Endothelial cell of umbilical vein (primary cell): ENCODE measurements at regions of chr5 and their contacts with region 1.

Region 1: DNA sequence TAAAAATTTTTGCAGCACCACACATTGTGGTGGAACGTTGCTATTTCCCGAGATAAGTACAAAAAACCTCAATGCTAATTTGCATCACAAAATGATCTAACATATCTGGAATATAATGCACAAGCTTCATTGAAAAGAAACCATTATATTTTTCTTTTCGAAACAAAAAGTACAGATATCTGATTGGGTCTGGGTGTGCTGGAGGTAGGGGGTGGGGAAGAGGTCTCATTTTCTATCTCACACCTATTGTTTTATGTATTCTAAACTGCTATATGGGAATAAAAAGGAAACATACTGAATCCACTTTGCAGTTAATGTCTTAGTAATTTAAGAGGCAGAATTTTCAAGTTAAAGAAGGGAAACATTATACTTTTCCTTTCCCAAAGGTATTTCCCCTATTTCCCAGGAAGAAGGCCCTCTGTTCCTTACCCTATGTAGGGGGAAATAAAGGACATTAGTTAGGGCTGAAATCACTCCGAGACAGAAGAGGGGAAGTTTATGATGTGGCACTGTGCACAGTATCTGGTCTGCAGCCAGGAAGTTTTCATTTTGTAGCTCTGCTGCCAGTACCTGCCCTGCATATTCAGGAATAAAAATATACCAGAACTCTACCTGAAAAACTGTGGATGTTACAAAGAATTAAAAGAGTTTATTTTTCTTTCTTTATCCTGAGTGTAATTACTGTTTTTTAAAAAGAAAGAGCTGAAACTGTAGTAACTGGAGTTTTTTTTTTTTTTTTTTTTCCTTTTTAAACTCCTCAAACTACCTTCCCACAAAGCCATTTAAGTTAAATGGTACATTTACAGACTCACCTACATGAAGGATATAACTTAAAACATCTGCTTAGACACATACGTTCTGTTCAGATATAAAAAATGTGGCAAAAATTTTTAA is 7.4 kb downstream of the MEF2C start:
- DNase-seq: peak; percentile 62
- H3K4me3 ChIP-seq: peak overlapping the region in 1 of 3 experiments; percentile 30
- H3K27ac ChIP-seq: peak overlapping the region; percentile 65
- H3K4me1 ChIP-seq: peaks cover 43% of the 10 kb centered on the region
- H3K27me3 ChIP-seq: no peaks in the 10 kb centered on the region
- CTCF ChIP-seq: no peak
- POLR2A ChIP-seq: peak; percentile 18

Region 2: GRCh38 chr5:88847420-88847819 is 28.2 kb before region 1 on chr5:
- CTCF ChIA-PET with region 1: interaction called, 4 read pairs
- POLR2A ChIA-PET with region 1: no interaction called
- dilution Hi-C with region 1: no loop called
- intact Hi-C with region 1: loop called (anchors 2 kb)
- DNase-seq: no peak
- H3K4me3 ChIP-seq: no peak overlapping the region
- H3K27ac ChIP-seq: no peak overlapping the region
- H3K4me1 ChIP-seq: peaks cover 9% of the 10 kb centered on the region
- H3K27me3 ChIP-seq: no peaks in the 10 kb centered on the region
- CTCF ChIP-seq: no peak
- POLR2A ChIP-seq: no peak